ENCODE measurements at regions of chr19 and their contacts with region 1.

Region 1: DNA sequence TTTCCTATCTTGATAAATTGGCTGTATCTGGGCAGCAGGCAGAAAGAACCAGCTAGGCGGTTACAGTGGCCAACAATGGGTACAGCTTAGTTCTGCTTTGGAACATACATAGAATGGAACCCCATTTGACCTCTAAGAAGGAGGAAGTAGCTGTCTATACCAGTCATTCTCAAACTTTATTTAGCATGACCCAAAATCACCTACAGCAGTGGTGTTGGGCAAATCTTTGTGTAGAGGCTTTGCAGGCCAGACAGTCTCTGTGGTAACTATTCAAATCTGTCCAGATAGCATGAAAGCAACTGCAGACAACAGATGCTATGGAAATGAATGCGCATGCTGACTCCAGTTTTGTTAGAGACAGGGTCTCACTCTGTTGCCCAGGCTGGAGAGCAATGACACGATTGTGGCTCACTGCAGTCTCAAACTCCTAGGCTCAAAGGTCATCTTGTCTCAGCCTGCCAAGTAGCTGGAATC is 12.0 kb upstream of the KCNC3 start:
- DNase-seq: peak; percentile 96
- ATAC-seq: peak; percentile 78
- H3K4me3 ChIP-seq: peak overlapping the region; percentile 90
- H3K27ac ChIP-seq: peak overlapping the region; percentile 95
- H3K4me1 ChIP-seq: peaks cover 20% of the 10 kb centered on the region
- H3K27me3 ChIP-seq: no peaks in the 10 kb centered on the region
- CTCF ChIP-seq: no peak
- EP300 ChIP-seq: peak; percentile 39 to 78; a peak in 3 of 4 replicates
- POLR2A ChIP-seq: peak; percentile 51
- RAD21 ChIP-seq: no peak

Region 2: GRCh38 chr19:50362656-50363424 is 21.7 kb after region 1 on chr19:
- CTCF ChIA-PET with region 1: interaction called, 29 read pairs
- POLR2A ChIA-PET with region 1: interaction called, 10 read pairs
- RAD21 ChIA-PET with region 1: interaction called, 28 read pairs
- SMC1A ChIA-PET with region 1: interaction called, 26 read pairs
- in situ Hi-C with region 1: no loop called
- intact Hi-C with region 1: no loop called
- DNase-seq: no peak
- ATAC-seq: no peak
- H3K4me3 ChIP-seq: no peak overlapping the region
- H3K27ac ChIP-seq: no peak overlapping the region
- H3K4me1 ChIP-seq: peaks cover 64% of the 10 kb centered on the region
- H3K27me3 ChIP-seq: no peaks in the 10 kb centered on the region
- CTCF ChIP-seq: no peak
- EP300 ChIP-seq: no peak
- POLR2A ChIP-seq: no peak
- RAD21 ChIP-seq: no peak

Region 3: DNA sequence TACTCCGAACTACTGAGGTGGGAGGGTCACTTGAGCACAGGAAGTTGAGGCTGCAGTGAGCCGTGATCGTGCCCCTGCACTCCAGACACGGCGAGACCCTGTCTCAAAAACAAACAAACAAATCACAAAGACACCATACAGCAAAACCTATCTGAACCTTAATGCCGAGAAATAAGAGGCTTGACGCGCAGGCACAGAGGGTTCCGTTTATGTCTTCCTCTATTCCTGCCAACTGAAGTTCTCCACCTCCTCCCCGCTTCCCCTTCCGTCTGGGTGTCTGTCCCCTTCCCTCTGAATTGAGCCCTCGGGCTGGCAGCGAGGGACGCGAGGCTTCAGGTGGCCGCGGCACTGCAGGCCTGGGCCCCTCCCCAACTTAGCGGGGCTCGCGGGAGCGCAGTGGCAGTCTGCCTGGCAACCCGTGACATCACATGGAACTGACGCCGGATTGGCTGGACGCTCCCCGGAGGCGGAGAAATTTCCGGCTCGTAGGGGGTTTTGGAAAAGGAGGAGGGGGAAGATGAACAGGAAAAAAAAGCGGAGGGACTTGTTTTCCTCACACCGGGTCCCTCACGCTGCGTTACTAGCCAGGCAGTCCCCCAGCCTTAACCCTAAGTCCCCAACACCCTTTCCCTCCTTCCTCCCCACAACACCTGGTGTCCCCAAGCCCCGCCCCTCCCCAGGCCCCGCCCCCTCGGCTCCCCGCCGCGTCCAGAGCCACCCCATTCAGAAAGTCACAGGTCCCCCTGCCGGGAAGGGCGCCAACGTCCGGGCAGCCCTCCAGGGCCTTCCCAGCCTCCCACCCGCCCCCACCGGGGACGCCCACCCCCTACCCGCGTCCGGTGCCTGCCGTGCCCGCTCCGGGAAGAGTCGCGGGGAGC is 90.5 kb after region 1 on chr19:
- CTCF ChIA-PET with region 1: no interaction called
- POLR2A ChIA-PET with region 1: no interaction called
- RAD21 ChIA-PET with region 1: no interaction called
- SMC1A ChIA-PET with region 1: no interaction called
- in situ Hi-C with region 1: no loop called
- intact Hi-C with region 1: loop called (anchors 5 kb)
- DNase-seq: peak; percentile 61
- ATAC-seq: peak; percentile 86
- H3K4me3 ChIP-seq: peak overlapping the region; percentile 57; the same call in 1 of the 2 replicates
- H3K27ac ChIP-seq: peak overlapping the region; percentile 82
- H3K4me1 ChIP-seq: peaks cover 58% of the 10 kb centered on the region
- H3K27me3 ChIP-seq: peaks cover 0 to under 1% of the 10 kb centered on the region in 2 experiments; a peak in 1 of 4 replicates
- CTCF ChIP-seq: no peak
- EP300 ChIP-seq: 0 out of 4 replicates have a peak, but pooled peaks of 1 of the 2 experiments have one; percentile 23
- POLR2A ChIP-seq: peak; percentile 71
- RAD21 ChIP-seq: no peak

Measured in GM12878 (cell line).